ENCODE measurements at regions of chr11 and their contacts with region 1.

Region 1: GRCh38 chr11:14300661-14301304 is 58.2 kb downstream of the RRAS2 start:
- DNase-seq: peak; percentile 70
- ATAC-seq: peak; percentile 88
- H3K4me3 Mint-ChIP-seq: no peak overlapping the region
- H3K27ac Mint-ChIP-seq: no peak overlapping the region
- H3K4me1 Mint-ChIP-seq: peaks cover 21% of the 10 kb centered on the region
- H3K27me3 Mint-ChIP-seq: no peaks in the 10 kb centered on the region

Region 2: GRCh38 chr11:14288189-14288935 is 12.4 kb before region 1 on chr11:
- CTCF ChIA-PET with region 1: interaction called, 10 read pairs
- DNase-seq: no peak
- ATAC-seq: peak; percentile 86
- H3K4me3 Mint-ChIP-seq: peak overlapping the region; percentile 52
- H3K27ac Mint-ChIP-seq: peak overlapping the region; percentile 90
- H3K4me1 Mint-ChIP-seq: peaks cover 35% of the 10 kb centered on the region
- H3K27me3 Mint-ChIP-seq: no peaks in the 10 kb centered on the region

Region 3: DNA sequence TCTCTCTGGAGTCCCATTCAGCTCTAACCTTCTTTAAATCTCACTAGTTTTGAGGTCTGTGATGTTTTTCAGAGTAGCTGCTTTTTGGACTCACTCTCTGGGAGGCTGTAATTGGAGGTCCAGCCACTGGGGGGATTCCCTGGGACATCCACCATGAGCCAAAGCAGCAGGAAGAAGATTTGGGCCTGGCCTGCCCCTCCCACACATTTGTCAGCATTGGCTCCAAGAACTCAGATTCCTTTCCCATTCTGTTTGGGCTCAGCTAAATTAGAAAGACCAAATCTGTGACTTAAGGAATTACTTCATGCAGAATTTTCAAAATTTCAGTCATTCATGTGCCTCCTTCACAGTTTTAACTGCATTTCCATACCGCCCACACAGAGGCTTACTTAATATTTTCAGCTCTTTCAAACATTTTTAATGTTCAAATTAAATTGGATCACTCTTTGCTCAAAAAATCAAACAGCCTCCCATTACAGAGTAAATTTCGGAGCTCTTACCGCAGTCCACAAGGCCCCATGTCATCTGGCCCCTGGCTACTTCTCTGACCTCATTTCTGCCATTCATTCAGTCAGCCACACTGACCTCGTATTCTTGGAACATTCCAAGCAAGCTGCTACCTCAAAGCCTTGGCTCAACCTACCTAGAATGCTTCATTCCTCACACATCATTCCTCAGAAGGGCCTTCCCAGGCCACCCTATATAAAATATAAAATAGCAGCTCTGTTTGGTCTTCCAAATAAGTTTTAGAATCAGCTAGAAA is 112.7 kb after region 1 on chr11:
- CTCF ChIA-PET with region 1: interaction called, 39 read pairs
- DNase-seq: peak; percentile 48
- ATAC-seq: no peak
- H3K4me3 Mint-ChIP-seq: peak overlapping the region; percentile 7
- H3K27ac Mint-ChIP-seq: peak overlapping the region; percentile 38
- H3K4me1 Mint-ChIP-seq: peaks cover 74% of the 10 kb centered on the region
- H3K27me3 Mint-ChIP-seq: no peaks in the 10 kb centered on the region

Measured in activated CD8-positive, alpha-beta memory T cell treated with anti-CD3 and anti-CD28 coated beads, Interleukin-2, amount 10 ng/mL, durations not matched to agents 7 days and 5 days (primary cell).